Ascending aorta (tissue), 2 donors: ENCODE measurements at regions of chr3 and their contacts with region 1.

Region 1: DNA sequence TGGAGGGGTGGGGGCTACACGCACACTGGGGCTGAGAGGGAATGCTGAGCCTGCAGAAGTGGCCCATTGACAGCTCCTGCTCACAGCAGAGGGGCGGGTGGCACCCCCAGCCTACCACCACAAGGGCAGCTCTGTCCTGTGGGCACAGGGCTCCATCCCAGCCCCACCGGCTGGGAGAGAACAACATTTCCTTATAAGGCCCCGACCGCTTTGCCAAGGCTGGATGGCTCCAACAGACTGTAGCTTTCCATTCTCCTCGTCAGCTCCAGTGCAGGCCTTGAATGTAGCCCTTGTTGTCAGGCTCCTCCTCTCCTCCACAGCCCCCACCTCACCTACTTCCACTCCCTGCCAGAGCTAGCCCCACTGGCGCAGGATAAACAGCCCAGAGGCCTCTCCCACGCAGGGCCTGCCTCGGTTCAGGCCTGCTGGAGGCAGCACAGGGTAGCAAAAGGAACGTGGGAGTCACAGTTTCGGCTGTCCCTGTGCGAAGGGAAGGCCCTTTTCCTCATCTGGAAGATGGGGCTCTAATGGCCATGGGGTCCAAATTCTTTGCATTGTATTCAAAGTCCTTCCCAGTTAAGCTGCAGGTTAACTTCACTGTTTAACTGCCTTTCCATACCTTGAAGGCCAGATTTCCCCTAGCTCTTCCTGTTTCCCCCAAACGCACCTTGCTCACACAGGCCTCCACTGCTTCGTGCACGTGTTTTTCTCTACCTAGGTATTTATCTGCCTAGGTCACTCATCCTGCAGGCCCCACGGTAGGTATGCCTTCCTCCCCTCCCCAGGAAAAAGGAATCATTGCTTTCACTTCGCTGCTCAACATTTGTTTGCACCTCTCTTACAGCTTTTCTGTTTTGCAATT is 101.6 kb upstream of the LPP start:
- DNase-seq: peak; percentile 86 to 96
- H3K4me3 ChIP-seq: peak overlapping the region; percentile 22 to 47
- H3K27ac ChIP-seq: peak overlapping the region; percentile 88 to 93
- H3K4me1 ChIP-seq: peaks cover 8 to 31% of the 10 kb centered on the region in 2 donors
- H3K27me3 ChIP-seq: no peaks in the 10 kb centered on the region
- CTCF ChIP-seq: peak; percentile 66 to 82 (median 74)

Region 2: DNA sequence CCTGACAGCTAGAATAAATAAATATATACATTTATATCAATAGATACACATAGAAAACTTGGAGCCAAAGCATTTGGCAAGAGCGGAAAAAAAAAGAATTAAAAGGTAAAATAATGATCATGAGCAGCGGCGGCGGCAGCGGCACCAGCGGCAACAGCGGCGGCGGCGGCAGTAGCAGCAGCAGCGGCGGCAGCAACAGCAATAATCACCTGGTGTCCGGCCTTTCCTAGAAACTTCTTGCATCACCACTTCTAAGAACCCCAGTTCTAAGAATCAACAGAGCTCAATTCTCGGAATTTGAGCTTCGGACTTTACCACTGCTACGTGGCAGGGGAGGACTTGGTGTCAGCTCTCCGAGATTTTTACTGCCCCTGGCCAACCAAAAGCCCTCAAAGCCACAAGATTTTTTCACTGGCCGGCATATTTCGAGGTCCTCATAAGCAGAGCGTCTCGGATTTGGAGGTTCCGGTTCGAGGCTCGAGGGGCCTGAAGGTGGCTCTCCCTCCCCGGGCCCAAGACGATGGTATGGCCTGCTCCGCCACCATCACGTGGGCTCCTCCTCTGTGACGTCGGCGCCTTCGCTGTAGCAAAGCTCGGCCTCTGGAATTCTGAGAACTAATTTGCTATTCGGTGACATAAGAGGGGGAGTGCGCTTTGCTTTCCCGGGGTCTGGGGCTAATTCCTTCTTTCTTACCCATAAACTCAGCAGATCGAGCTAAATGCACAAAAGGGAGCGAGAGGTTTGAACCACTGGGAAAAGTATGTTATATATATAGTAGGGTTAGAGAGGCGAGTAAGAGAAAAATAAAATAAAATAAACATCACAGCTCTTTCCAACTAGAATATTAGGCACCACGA is 307.0 kb before region 1 on chr3 and contains the start of gene BCL6:
- intact Hi-C with region 1: loop called (anchors 2 kb)
- DNase-seq: peak; percentile 66 to 97
- H3K4me3 ChIP-seq: peak within 1 kb of the TSS; percentile 73 to 75
- H3K27ac ChIP-seq: peak within 1 kb of the TSS; percentile 98 to 99
- H3K4me1 ChIP-seq: peaks cover 9 to 12% of the 10 kb centered on the region in 2 donors
- H3K27me3 ChIP-seq: no peaks in the 10 kb centered on the region
- CTCF ChIP-seq: peak in 1 of 3 experiments; percentile 12
- total RNA-seq, gene BCL6: 97.9 TPM

Region 3: GRCh38 chr3:188212308-188212969 is 160.0 kb after region 1 on chr3:
- intact Hi-C with region 1: loop called (anchors 5 kb)
- DNase-seq: peak in 1 of 2 donors; percentile 82
- H3K4me3 ChIP-seq: peak overlapping the region; percentile 49 to 63
- H3K27ac ChIP-seq: peak overlapping the region; percentile 92 to 96
- H3K4me1 ChIP-seq: peaks cover 17 to 33% of the 10 kb centered on the region in 2 donors
- H3K27me3 ChIP-seq: no peaks in the 10 kb centered on the region
- CTCF ChIP-seq: no peak

Region 4: DNA sequence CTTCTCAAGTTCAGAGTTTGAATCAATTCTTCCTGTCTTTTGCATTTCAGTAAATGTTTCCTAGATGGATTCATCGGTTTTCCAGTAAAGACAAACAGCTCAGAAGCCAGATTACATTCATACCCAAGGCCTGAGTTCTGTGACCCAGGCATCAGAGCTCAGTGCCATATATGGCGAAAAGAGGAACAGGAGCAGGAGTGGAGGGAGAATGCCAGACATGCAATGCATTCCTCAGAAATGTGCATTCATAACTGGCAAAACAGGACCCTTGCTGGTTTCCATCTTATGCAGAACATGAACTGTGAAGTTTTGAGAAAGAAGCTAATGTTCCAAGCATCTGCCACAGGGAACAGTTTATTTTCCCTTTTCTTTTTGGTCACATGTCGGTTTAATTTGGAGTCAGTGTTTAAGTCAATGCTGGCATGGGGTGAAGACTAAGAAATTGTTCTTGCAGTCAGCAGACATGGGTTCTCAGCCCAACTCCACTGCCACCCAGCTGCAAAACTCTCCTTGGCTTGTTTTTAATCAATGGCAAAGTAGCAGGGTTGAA is 218.1 kb after region 1 on chr3:
- intact Hi-C with region 1: loop called (anchors 2 kb)
- DNase-seq: peak in 1 of 2 donors; percentile 91
- H3K4me3 ChIP-seq: peak overlapping the region in 1 of 2 donors; percentile 10
- H3K27ac ChIP-seq: peak overlapping the region; percentile 94 to 99
- H3K4me1 ChIP-seq: peaks cover 28 to 73% of the 10 kb centered on the region in 2 donors
- H3K27me3 ChIP-seq: no peaks in the 10 kb centered on the region
- CTCF ChIP-seq: peak in 1 of 3 experiments; percentile 35

Region 5: DNA sequence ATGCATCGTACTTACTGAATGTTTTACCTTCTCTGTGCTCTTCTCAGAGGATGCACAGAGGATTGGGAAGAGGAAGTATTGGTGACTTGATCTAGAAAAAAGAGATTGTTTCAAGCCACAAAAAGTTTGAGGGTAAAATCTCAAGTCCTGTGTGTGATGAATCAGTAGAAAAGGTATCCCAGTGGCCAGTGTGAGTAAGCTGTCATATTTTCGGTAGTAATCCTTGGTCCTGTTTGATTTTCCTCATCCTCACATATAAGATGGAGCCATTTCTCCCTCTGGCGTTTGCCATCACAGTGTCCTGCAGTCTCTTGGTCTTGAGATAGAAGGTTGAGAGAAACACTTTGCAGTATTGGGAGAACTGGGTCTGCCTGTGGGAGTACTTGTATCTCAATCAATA is 268.4 kb after region 1 on chr3:
- intact Hi-C with region 1: loop called (anchors 10 kb)
- DNase-seq: no peak
- H3K4me3 ChIP-seq: no peak overlapping the region
- H3K27ac ChIP-seq: peak overlapping the region in 1 of 2 donors; percentile 53
- H3K4me1 ChIP-seq: peaks cover 13 to 51% of the 10 kb centered on the region in 2 donors
- H3K27me3 ChIP-seq: no peaks in the 10 kb centered on the region
- CTCF ChIP-seq: no peak

Region 6: DNA sequence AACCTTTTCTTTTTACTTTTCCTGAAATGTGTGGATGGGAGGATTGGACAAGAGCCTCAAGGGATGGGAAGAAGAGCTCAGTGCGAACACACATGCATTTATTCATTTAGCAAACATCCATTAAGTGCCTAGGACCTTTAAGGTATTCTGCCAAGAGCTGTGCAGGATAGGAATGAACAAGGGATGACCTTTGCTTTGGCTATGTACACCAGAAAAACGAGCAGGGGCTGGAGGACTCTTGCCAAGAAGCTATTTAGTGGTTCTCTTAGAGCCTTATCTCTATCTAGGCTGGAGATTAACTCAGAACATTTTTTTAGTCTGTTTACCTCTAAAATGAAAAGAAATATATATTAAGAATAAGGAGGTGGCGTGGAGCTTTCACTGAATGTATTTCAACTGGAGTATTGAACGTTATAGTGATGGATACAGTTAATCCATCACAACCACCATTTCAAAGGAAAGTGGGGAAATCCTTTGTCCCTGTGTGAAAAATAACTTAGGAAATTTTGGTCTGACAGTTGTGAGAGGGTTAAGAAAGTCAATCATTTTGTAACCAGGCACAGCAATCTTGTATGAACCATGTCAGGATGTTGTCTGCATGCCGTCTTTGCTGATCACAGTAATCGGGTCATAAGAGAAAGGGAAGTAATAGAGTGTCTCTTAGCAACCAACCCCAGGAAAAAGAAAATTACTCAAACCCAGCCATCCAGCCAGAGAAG is 380.6 kb after region 1 on chr3:
- intact Hi-C with region 1: loop called (anchors 2 kb)
- DNase-seq: no peak
- H3K4me3 ChIP-seq: no peak overlapping the region
- H3K27ac ChIP-seq: peak overlapping the region; percentile 55 to 79
- H3K4me1 ChIP-seq: peaks cover 9 to 42% of the 10 kb centered on the region in 2 donors
- H3K27me3 ChIP-seq: no peaks in the 10 kb centered on the region
- CTCF ChIP-seq: no peak

Region 7: GRCh38 chr3:188947401-188948280 is 895.2 kb after region 1 on chr3:
- intact Hi-C with region 1: loop called (anchors 5 kb)
- DNase-seq: peak; percentile 76 to 99
- H3K4me3 ChIP-seq: peak overlapping the region; percentile 57 to 64
- H3K27ac ChIP-seq: peak overlapping the region; percentile 98 to 99
- H3K4me1 ChIP-seq: peaks cover 32 to 74% of the 10 kb centered on the region in 2 donors
- H3K27me3 ChIP-seq: no peaks in the 10 kb centered on the region
- CTCF ChIP-seq: peak; percentile 30 to 45 (median 44)